ENCODE measurements at regions of chr11 and their contacts with region 1.

Region 1: DNA sequence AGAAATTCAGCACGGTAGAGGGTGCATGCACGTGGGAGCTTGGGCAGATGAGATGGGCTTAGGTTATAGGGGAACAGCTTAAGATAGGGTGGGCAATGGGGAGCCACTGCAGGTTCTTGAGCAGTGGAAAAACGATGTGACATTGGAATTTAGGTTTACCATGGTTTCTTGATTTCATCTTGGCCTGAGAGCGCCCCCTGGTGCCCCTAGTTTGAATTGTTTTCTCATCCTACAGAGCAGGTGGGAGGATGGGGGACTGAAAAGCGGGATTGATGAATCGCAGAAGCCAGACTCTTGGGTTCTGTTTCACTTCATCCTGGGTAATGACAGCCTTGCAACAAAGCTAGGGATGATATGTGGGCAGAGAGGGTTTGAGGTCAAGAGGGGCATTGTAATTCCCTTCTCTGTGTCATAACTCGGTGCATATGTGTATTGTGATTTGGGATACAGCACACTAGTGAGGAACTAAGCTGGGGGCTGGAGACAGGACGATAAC is 6.7 kb upstream of the MCAM start:
- DNase-seq: peak; percentile 37
- ATAC-seq: no peak
- H3K4me3 ChIP-seq: no peak overlapping the region
- H3K27ac ChIP-seq: no peak overlapping the region
- H3K4me1 ChIP-seq: peaks cover 27% of the 10 kb centered on the region
- H3K27me3 ChIP-seq: no peaks in the 10 kb centered on the region
- CTCF ChIP-seq: peak; percentile 73 to 86 (median 82)
- EP300 ChIP-seq: no peak
- POLR2A ChIP-seq: no peak
- RAD21 ChIP-seq: peak; percentile 79

Region 2: GRCh38 chr11:118928108-118928870 is 395.3 kb before region 1 on chr11:
- CTCF ChIA-PET with region 1: no interaction called
- POLR2A ChIA-PET with region 1: no interaction called
- RAD21 ChIA-PET with region 1: no interaction called
- SMC1A ChIA-PET with region 1: no interaction called
- in situ Hi-C with region 1: no loop called
- intact Hi-C with region 1: loop called (anchors 5 kb)
- DNase-seq: peak; percentile 67
- ATAC-seq: peak; percentile 67
- H3K4me3 ChIP-seq: peak overlapping the region; percentile 97
- H3K27ac ChIP-seq: peak overlapping the region; percentile 67
- H3K4me1 ChIP-seq: peaks cover 35% of the 10 kb centered on the region
- H3K27me3 ChIP-seq: no peaks in the 10 kb centered on the region
- CTCF ChIP-seq: peak; percentile 93 to 97 (median 96)
- EP300 ChIP-seq: peak; percentile 15 to 60; a peak in 1 of 4 replicates
- POLR2A ChIP-seq: 0 out of 2 replicates have a peak, but pooled peaks have one; percentile 49
- RAD21 ChIP-seq: peak; percentile 63

Region 3: GRCh38 chr11:119101759-119102423 is 221.7 kb before region 1 on chr11 and contains the start of gene DPAGT1:
- CTCF ChIA-PET with region 1: interaction called, 11 read pairs
- POLR2A ChIA-PET with region 1: interaction called, 4 read pairs
- RAD21 ChIA-PET with region 1: interaction called, 8 read pairs
- SMC1A ChIA-PET with region 1: no interaction called
- in situ Hi-C with region 1: no loop called
- intact Hi-C with region 1: no loop called
- DNase-seq: peak; percentile 92
- ATAC-seq: peak; percentile 91
- H3K4me3 ChIP-seq: peak within 1 kb of the TSS; percentile 97
- H3K27ac ChIP-seq: peak within 1 kb of the TSS; percentile 96
- H3K4me1 ChIP-seq: peaks cover 27% of the 10 kb centered on the region
- H3K27me3 ChIP-seq: no peaks in the 10 kb centered on the region
- CTCF ChIP-seq: no peak
- EP300 ChIP-seq: no peak
- POLR2A ChIP-seq: peak; percentile 59; the same call in 1 of the 2 replicates
- RAD21 ChIP-seq: no peak
- polyA plus RNA-seq, gene DPAGT1: 33.0 to 47.8 TPM

Region 4: GRCh38 chr11:119168471-119169281 is 154.9 kb before region 1 on chr11 and contains the start of gene NLRX1:
- CTCF ChIA-PET with region 1: interaction called, 22 read pairs
- POLR2A ChIA-PET with region 1: interaction called, 3 read pairs
- RAD21 ChIA-PET with region 1: interaction called, 6 read pairs
- SMC1A ChIA-PET with region 1: interaction called, 3 read pairs
- in situ Hi-C with region 1: no loop called
- intact Hi-C with region 1: loop called (anchors 5 kb)
- DNase-seq: peak; percentile 40
- ATAC-seq: peak; percentile 98
- H3K4me3 ChIP-seq: peak within 1 kb of the TSS; percentile 92
- H3K27ac ChIP-seq: peak within 1 kb of the TSS; percentile 82
- H3K4me1 ChIP-seq: peaks cover 4% of the 10 kb centered on the region; the same call in 1 of the 2 replicates
- H3K27me3 ChIP-seq: no peaks in the 10 kb centered on the region
- CTCF ChIP-seq: peak; percentile 86 to 97 (median 95)
- EP300 ChIP-seq: no peak
- POLR2A ChIP-seq: peak; percentile 90
- RAD21 ChIP-seq: peak; percentile 56
- polyA plus RNA-seq, gene NLRX1: 0.85 to 1.0 TPM

Region 5: DNA sequence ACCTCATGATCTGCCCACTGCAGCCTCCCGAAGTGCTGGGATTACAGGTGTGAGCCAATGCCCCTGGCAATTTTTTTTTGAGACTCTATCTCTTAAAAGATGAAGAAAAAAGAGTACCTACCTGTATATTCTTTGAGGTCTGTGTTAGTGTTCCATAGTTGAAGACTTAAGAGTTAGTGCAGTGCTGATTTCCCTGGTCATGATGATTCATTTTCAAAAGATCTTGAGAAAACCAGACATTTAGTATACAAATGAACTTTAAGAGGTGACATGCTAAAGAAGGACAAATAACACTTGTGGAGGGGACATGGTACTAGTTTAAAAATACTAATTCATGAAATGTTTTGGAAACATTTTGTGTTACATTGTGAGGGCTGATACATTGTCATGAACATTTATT is 99.7 kb before region 1 on chr11:
- CTCF ChIA-PET with region 1: no interaction called
- POLR2A ChIA-PET with region 1: no interaction called
- RAD21 ChIA-PET with region 1: no interaction called
- SMC1A ChIA-PET with region 1: no interaction called
- in situ Hi-C with region 1: no loop called
- intact Hi-C with region 1: no loop called
- DNase-seq: no peak
- ATAC-seq: no peak
- H3K4me3 ChIP-seq: no peak overlapping the region
- H3K27ac ChIP-seq: no peak overlapping the region
- H3K4me1 ChIP-seq: peaks cover 3% of the 10 kb centered on the region; the same call in 1 of the 2 replicates
- H3K27me3 ChIP-seq: no peaks in the 10 kb centered on the region
- CTCF ChIP-seq: no peak
- EP300 ChIP-seq: no peak
- POLR2A ChIP-seq: no peak
- RAD21 ChIP-seq: no peak

Region 6: DNA sequence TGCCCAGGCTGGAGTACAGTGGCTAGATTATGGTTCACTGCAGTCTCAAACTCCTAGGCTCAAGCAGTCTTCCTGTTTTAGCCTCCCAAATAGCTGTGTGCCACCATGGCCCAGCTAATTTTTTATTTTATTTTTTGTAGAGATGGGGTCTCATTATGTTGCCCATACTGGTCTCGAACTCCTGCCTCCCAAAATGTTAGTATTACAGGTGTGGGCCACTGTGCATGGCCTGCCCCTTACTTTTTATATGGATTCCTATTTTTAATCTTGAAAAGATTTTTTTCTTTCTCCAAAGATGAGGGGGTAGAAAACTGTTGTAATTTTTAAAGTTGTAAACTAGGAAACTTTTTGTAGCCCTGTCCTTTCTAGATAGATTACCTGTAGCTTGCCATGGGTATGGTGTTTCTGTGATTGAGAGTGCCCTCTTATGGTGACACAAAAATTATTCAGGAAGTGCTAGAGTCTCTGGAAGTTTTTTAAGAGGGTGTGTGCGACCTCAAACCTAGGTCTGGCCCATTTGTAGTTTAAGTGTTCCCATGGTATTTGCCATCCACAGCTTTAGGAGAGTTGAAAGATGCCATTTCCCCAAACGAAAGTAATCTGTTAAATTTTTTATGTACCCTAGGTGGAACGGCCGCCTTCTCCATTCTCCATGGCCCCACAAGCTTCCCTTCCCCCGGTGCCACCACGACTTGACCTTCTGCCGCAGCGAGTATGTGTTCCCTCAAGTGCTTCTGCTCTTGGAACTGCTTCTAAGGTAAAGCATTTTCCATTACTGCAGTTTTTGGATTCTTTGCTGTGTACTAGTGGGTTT is 39.0 kb before region 1 on chr11:
- CTCF ChIA-PET with region 1: interaction called, 49 read pairs
- POLR2A ChIA-PET with region 1: interaction called, 4 read pairs
- RAD21 ChIA-PET with region 1: interaction called, 22 read pairs
- SMC1A ChIA-PET with region 1: interaction called, 15 read pairs
- in situ Hi-C with region 1: no loop called
- intact Hi-C with region 1: no loop called
- DNase-seq: no peak
- ATAC-seq: peak; percentile 93
- H3K4me3 ChIP-seq: no peak overlapping the region
- H3K27ac ChIP-seq: no peak overlapping the region
- H3K4me1 ChIP-seq: no peaks in the 10 kb centered on the region
- H3K27me3 ChIP-seq: no peaks in the 10 kb centered on the region
- CTCF ChIP-seq: peak; percentile 48 to 75 (median 55)
- EP300 ChIP-seq: no peak
- POLR2A ChIP-seq: no peak
- RAD21 ChIP-seq: peak; percentile 82

Region 7: DNA sequence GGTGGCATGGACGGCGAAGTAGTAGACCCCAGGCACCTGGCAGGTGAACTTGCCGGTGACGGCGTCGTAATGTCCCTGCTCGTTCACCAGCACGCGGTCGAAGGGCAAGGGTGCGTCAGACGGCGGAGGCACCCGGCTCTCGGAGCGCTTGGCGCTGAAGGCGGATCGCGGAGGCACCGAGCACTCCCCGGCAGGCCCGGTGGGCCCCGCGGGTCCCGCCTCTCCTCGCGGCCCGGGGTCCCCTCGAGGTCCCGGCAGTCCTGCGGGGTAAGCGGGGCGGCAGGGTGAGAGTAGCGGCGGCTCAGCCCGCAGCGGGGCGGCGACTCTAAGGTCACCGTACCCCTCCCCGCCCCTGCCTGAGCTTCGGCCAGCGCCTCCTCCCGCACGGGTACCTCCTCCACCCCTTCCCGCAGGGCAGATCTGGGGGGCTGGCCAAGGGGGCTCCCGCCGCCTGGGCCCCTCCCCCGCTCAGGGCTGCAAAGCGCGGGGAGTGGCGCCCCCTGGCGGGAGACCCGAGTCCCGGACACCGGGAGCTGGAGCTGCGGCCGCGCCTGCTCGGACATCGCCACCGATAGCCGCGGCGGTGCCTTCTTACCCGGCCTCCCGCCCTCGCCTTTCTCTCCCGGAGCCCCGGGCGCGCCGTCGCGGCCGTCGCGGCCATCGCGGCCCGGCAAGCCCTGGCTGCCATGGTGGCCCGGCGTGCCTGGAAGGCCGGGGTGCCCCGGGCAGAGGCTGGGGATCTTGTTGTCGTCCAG is 16.2 kb after region 1 on chr11:
- CTCF ChIA-PET with region 1: interaction called, 88 read pairs
- POLR2A ChIA-PET with region 1: interaction called, 9 read pairs
- RAD21 ChIA-PET with region 1: interaction called, 24 read pairs
- SMC1A ChIA-PET with region 1: interaction called, 23 read pairs
- in situ Hi-C with region 1: no loop called
- intact Hi-C with region 1: no loop called
- DNase-seq: no peak
- ATAC-seq: peak; percentile 63
- H3K4me3 ChIP-seq: no peak overlapping the region
- H3K27ac ChIP-seq: no peak overlapping the region
- H3K4me1 ChIP-seq: peaks cover 8% of the 10 kb centered on the region
- H3K27me3 ChIP-seq: peaks cover 9 to 11% of the 10 kb centered on the region in 2 experiments
- CTCF ChIP-seq: peak; percentile 48 to 76 (median 49)
- EP300 ChIP-seq: no peak
- POLR2A ChIP-seq: no peak
- RAD21 ChIP-seq: peak; percentile 25; the same call in 1 of the 2 replicates